GM10248 (cell line): ENCODE measurements at regions of chr2 and their contacts with region 1.

Region 1: DNA sequence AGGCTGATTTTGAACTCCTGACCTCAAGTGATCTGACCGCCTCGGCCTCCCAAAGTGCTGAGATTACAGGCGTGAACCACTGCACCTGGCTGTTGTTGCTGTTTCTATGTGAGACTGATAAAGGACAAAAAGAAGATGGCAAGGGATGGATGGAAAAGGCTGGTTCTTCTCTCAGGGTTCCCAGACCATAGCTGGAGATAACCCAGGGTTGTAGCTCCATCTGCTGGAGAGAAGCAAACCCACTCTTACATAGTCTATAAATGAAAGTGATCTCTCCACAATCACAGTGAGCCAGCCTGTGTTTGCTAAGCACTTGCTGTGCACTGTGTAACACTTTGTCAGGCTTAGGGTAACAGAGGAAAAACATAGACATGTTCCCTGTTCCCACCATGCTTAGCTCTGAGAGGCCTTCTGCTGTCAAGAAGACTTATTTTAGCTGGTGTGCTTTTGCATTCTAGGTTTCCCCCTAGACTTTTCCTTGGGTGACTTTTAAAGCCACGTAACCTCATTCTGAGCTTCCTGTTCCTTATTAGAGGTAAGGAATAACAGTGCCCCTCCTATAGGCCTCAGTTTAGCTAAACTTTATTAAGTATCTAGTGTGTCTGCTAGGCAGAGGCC is 49.7 kb downstream of the LIMS1 start:
- DNase-seq: peak; percentile 74
- CTCF ChIP-seq: peak; percentile 79

Region 2: DNA sequence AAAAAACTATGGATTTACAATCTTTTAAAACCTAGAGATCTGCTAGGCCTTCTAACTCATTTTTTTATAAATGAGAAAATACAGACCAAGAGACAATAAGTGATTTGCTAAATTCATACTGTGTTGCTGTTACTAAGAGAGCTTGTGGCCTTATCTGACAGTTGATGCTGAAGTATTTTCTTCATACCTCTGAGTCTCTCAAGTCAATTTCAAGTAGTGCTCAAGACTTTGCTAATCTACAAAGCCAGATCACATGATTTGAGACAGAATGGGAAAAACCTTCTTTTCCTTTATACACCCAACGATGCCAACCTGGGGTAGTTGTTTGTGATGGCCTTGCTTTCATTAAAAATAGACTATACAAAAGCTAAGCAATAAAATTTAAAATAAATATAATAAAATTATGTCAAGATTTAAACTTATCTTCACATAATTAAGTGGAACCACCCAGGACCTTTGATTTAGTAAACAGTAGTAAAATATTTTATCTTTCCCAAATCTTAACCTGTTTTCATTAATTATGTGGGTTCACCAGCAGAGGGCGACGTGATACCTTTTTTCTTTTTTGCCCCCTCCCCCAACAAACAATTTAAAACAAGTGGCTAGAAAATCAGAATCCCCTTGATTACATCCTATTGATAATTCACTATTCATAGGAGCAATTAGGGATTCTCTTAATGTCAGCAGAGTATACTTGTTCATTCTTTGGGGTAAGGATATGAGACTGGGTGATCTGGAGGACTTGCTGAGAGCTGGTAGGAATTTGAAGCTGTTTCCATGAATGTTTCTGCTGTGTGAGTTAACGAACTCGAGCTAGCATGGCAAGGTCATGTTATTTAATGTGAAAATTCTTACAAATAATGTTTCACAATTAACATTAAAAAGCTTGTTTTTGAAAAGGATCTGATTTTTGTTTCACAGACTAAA is 647.3 kb before region 1 on chr2:
- CTCF ChIA-PET with region 1: interaction called, 15 read pairs
- POLR2A ChIA-PET with region 1: no interaction called
- DNase-seq: no peak
- CTCF ChIP-seq: peak; percentile 34

Region 3: DNA sequence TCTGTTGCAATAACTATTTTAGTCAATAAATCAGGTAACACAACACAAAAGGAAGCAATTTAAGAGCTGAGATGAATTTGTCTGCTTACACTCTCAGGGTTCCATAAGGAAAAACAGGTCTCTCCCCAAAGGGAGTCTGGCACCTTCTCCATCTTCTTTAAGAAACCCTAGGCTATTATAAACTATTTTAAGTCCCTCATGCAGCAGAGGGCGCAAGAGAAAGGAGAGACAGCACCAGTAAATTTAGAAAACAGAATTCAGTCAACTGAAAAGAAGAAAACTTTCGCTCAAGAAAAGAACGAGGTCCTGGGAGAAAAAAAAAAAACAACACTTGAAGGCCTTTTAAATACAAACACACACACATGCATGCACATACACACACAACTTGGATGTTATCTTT is 187.2 kb before region 1 on chr2:
- CTCF ChIA-PET with region 1: interaction called, 28 read pairs
- POLR2A ChIA-PET with region 1: no interaction called
- DNase-seq: no peak
- CTCF ChIP-seq: peak; percentile 26

Region 4: DNA sequence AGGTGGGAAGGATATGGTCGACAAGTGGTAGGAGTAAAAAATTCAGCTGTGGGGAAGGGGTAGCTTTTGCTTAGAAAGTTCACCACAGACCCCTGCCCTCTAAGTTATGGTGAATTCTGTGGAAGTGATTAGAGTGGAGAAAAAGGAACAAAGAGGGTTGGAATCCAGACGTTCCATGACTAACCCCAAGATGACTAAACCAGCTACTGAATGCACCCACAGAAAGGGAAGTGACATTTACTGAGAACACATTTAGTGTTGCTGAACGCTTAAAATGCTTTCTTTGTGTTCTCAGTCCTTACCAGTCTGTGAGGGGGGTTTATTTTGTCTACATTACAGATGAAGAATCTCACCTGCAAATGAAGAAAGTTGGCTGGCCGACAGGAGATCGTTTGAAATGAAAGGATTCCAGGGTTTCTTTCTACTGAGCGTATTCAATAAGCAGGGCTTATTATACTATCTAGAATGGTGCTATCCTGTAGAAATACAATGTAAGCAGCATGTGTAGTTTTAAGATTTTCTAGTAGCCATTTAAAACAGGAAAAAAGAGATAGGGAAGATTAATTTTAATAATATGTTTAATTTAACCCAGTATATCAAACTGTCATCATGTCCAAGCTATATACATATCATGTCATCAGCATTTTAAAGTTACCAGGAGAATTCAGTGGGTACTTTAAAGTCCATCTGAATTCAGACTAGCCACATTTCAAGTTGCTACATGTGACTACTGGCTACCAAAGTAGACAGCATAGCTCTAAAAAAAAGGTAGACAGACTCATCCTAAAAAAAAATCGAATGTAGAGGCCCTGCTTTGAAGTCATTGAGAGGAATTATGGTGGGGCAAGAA is 10.3 kb after region 1 on chr2:
- CTCF ChIA-PET with region 1: interaction called, 38 read pairs
- POLR2A ChIA-PET with region 1: no interaction called
- DNase-seq: peak; percentile 49
- CTCF ChIP-seq: no peak

Region 5: DNA sequence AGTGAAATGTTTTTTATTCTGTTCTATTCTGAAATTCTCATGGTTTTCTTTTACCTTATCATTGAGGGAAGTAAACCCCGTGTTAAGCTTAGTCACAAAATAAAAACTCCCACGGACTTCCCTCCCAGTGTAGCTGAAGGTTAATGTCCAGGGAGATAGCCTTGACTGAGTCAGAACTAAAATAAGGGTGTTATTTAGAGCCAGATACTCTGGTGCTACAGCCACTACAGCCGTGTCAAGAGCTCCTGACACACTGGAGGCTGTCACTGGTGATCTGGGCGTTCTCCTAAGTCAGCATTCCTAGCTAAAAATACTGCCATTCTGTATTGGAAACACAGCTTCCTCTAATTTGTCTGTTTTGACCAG is 53.3 kb after region 1 on chr2:
- CTCF ChIA-PET with region 1: interaction called, 27 read pairs
- POLR2A ChIA-PET with region 1: no interaction called
- DNase-seq: peak; percentile 56
- CTCF ChIP-seq: no peak

Region 6: DNA sequence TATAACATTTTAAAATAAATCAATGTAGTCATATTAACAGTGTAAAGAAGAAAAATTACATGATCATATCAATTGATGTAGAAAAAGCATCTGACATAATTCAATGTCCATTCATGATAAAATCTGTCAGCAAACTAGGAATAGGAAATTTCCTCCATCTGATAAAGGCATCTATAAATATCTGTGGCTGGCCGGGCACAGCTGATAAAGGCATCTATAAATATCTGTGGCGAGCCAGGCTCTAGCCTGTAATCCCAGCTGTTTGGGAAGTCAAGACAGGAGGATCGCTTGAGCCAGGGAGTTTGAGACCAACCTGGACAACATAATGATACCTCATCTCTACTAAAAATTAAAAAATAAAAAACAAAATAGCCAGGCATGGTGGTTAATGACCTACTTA is 117.2 kb after region 1 on chr2:
- CTCF ChIA-PET with region 1: no interaction called
- POLR2A ChIA-PET with region 1: no interaction called
- DNase-seq: no peak
- CTCF ChIP-seq: no peak